ENCODE measurements at regions of chr16 and their contacts with region 1.

Region 1: GRCh38 chr16:31179747-31180459 is at the start of gene FUS:
- DNase-seq: peak; percentile 86 to 92 (median 92)
- H3K4me3 ChIP-seq: peak within 1 kb of the TSS; percentile 67 to 100 (median 89)
- H3K27ac ChIP-seq: peak within 1 kb of the TSS; percentile 78 to 100 (median 98)
- H3K27me3 ChIP-seq: no peaks in the 10 kb centered on the region
- CTCF ChIP-seq: peak in 10 of 56 donors; percentile 8 to 25 (median 15)
- total RNA-seq, gene FUS: 158 to 315 (median 238) TPM

Region 2: DNA sequence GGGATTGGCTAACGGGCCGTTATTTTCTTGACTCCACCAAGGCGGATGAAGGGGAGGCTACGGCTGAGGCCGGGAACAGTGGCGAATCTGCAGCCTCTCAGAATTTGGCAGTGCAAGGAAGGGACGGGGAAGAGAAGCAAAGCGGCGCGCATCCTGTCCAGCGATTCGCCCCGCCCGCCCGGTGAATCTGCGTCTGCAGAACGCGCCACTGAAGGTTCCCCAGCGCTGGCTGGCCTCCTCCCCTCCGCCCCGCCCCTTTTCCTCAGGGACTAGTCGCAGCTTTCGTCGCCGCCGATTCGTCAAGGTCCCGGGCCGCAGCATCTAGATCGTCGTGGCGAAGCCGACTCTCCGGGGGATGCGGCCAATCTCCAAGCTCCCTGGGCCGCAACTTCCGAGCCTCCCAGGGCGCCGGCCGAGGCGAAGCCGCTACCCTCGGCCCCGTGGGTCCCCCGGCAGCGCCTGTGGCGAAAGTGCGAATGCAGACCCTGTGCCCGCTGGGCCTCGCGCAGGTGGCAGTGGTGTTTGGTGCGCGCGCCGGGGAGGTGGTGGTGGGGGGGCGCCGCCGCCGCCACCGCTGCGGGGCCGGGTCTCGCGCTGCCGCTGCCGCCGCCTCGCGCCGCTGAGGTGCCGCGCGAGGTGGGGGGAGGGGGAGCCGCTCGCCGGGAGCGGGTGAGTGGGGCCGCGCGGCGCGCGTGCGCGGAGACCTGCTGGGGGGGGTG is 222.3 kb before region 1 on chr16 and contains the start of gene SETD1A:
- intact Hi-C with region 1: loop called in 1 of 2 experiments (anchors 10 kb)
- DNase-seq: peak; percentile 93 to 99 (median 96)
- H3K4me3 ChIP-seq: peak within 1 kb of the TSS; percentile 58 to 96 (median 84)
- H3K27ac ChIP-seq: peak within 1 kb of the TSS; percentile 77 to 99 (median 98)
- H3K27me3 ChIP-seq: no peaks in the 10 kb centered on the region
- CTCF ChIP-seq: peak in 18 of 56 donors; percentile 1 to 49 (median 12)
- total RNA-seq, gene SETD1A: 13.3 to 28.5 (median 17.9) TPM

Region 3: DNA sequence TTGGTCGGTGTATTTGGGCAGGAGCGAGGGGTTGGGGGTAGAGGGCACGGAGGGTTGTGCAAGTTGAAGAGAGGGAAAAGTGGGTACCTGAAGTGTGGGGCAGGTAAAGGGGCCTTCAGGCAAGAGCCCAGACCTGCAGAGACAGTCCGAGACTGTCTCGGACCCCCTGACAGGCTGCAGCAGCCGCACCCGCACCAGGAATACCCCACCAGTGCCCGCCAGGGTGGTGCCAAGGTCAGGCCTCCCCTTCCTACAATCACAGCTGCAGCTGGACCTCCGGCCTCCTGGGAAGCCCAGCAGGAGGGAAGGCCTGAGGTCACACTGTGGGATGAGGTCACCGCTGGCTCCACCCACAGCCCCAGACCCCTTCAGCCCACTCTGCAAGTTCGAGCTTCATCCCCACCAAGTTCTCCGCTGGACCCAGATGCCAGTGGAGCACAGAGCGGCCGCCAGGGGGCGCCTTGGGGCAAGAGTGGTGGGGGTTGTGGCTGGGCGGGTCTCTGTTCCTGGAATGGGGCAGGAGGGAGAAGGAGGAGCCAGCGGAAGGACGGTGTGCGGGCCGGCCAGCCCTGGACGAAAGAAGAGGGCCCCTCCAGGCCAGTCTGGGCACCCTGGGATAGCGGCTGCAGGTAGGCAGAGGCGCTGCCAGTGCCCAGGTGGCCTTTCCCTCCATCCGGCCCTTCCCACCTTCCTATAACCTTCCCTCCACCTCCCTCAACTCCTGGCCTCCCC is 195.1 kb before region 1 on chr16 and contains the start of gene HSD3B7:
- intact Hi-C with region 1: loop called in 1 of 2 experiments (anchors 10 kb)
- DNase-seq: peak; percentile 73 to 88 (median 79)
- H3K4me3 ChIP-seq: peak within 1 kb of the TSS in 57 of 59 donors; percentile 8 to 65 (median 45)
- H3K27ac ChIP-seq: peak within 1 kb of the TSS in 23 of 59 donors; percentile 14 to 74 (median 48)
- H3K27me3 ChIP-seq: no peaks in the 10 kb centered on the region
- CTCF ChIP-seq: peak; percentile 67 to 99 (median 94)
- total RNA-seq, gene HSD3B7: 2.0 to 15.0 (median 4.4) TPM

Region 4: DNA sequence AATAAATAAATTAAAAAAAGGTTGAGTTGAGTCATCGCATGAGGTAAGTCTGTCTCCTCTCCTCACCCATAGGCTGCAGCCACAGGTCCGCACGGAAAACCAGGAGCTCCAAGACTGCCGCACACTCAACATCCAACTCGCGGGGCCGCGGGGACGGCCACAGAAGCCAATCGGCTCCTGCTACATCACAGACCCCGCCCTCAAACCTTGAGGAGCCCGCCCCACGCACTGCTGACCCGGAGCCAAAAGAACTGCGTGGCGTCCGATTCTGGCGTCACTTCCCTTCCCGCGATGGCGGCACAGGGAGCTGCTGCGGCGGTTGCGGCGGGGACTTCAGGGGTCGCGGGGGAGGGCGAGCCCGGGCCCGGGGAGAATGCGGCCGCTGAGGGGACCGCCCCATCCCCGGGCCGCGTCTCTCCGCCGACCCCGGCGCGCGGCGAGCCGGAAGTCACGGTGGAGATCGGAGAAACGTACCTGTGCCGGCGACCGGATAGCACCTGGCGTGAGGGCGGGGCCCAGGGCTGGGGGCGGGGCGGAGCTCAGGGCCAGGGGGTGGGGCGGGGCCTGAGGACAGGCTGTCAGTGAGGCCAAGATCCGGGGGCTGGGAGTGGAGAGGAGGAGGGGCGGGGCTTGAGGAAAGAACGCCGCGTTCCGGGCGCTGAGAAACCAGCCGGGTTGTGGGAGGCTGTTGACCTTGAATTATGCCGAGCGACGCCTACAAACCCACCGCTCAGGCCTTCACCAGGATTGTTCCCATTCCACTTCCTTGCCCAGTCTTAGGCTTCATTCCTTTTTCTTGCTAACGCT is 62.3 kb before region 1 on chr16 and contains the start of gene KAT8:
- intact Hi-C with region 1: loop called in 1 of 2 experiments (anchors 5 kb)
- DNase-seq: peak; percentile 98 to 99 (median 99)
- H3K4me3 ChIP-seq: peak within 1 kb of the TSS; percentile 31 to 92 (median 78)
- H3K27ac ChIP-seq: peak within 1 kb of the TSS; percentile 59 to 97 (median 92)
- H3K27me3 ChIP-seq: no peaks in the 10 kb centered on the region
- CTCF ChIP-seq: peak in 6 of 56 donors; percentile 5 to 40 (median 16)
- total RNA-seq, gene KAT8: 58.1 to 99.4 (median 78.1) TPM

Region 5: GRCh38 chr16:31427441-31428278 is 247.8 kb after region 1 on chr16:
- intact Hi-C with region 1: loop called in 1 of 2 experiments (anchors 10 kb)
- DNase-seq: peak in 8 of 10 donors; percentile 24 to 72 (median 52)
- H3K4me3 ChIP-seq: peak overlapping the region; percentile 26 to 68 (median 57)
- H3K27ac ChIP-seq: peak overlapping the region in 28 of 59 donors; percentile 2 to 72 (median 60)
- H3K27me3 ChIP-seq: peaks cover 0 to 5% (median 0%) of the 10 kb centered on the region in 45 donors
- CTCF ChIP-seq: peak in 2 of 56 donors; percentile 18 to 19

Region 6: GRCh38 chr16:31507929-31508705 is 328.2 kb after region 1 on chr16 and contains the start of gene RUSF1:
- intact Hi-C with region 1: loop called in 1 of 2 experiments (anchors 1 kb)
- DNase-seq: peak; percentile 88 to 94 (median 92)
- H3K4me3 ChIP-seq: peak within 1 kb of the TSS; percentile 52 to 100 (median 97)
- H3K27ac ChIP-seq: peak within 1 kb of the TSS; percentile 56 to 98 (median 93)
- H3K27me3 ChIP-seq: no peaks in the 10 kb centered on the region
- CTCF ChIP-seq: peak in 36 of 56 donors; percentile 4 to 57 (median 26)
- total RNA-seq, gene RUSF1: 29.1 to 91.6 (median 63.9) TPM

Measured in dorsolateral prefrontal cortex (tissue), 120 donors.